HEK293 (cell line): ENCODE measurements at regions of chr17 and their contacts with region 1.

Region 1: DNA sequence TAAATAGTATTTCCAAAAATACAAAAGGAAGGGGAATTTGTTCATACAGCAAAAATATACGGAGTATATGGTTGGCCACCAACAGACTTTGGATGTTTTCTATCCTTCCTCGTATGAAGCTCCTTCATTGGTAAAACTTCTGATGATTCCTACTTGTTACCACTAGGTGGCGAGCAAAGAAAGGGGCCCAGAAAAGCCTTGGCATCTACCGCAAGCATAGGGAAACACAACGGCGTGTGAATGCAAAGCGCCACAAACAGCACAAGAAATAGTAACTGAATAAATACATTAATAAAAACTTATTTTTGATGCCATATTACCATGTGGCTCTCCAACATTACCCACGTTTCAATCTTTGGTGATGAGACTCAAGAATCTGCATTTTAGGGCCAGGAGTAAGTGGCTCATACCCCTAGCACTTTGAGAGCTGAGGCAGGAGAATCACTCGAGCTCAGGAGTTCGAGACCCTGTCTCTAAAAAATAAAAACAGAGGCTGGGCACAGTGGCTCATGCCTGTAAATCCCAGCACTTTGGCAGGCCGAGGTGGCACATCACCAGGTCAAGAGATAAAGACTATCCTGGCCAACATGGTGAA is 34.5 kb downstream of the YWHAE start:
- H3K4me3 ChIP-seq: no peak overlapping the region
- H3K27ac ChIP-seq: no peak overlapping the region; the same call in 1 of the 2 replicates
- H3K4me1 ChIP-seq: peaks cover 46% of the 10 kb centered on the region
- CTCF ChIP-seq: peak; percentile 61; the same call in 1 of the 2 replicates

Region 2: DNA sequence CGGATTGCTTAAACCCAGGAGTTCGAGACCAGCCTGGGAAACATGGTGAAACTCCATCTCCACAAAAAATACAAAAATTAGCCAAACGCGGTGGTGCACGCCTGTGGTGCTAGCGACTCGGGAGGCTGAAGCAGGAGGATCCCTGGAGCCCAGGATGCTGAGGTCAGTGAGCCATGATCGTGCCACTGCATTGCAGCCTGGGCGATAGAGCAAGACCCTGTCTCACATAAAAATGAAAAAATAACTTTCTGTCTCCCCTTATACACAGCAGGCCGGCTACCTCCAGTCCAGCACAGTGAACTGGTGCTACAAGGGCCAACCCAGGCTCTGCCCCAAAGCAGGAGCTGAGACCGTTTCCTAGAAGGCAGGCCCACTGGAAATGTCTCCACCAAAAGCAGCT is 25.2 kb before region 1 on chr17:
- CTCF ChIA-PET with region 1: interaction called, 11 read pairs
- POLR2A ChIA-PET with region 1: interaction called, 14 read pairs
- H3K4me3 ChIP-seq: no peak overlapping the region
- H3K27ac ChIP-seq: no peak overlapping the region
- H3K4me1 ChIP-seq: no peaks in the 10 kb centered on the region
- CTCF ChIP-seq: no peak

Region 3: DNA sequence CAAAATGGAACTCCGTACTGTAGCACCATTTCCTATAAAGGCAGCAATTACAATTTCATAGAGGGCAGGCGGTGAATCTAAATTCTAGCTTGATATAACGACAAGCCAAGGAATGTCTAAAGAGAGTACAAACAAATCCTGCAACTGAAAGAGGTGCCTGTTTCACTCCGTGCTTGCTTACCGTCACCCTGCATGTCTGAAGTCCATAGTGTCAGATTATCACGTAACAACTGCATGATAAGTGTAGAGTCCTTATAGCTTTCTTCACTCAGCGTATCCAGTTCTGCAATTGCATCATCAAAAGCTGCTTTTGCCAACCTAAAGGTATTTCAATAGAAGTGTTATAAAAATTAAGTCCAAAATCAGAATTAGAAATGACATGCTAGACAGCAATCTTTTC is 11.5 kb before region 1 on chr17:
- CTCF ChIA-PET with region 1: interaction called, 15 read pairs
- POLR2A ChIA-PET with region 1: no interaction called
- H3K4me3 ChIP-seq: no peak overlapping the region
- H3K27ac ChIP-seq: no peak overlapping the region
- H3K4me1 ChIP-seq: no peaks in the 10 kb centered on the region
- CTCF ChIP-seq: no peak

Region 4: DNA sequence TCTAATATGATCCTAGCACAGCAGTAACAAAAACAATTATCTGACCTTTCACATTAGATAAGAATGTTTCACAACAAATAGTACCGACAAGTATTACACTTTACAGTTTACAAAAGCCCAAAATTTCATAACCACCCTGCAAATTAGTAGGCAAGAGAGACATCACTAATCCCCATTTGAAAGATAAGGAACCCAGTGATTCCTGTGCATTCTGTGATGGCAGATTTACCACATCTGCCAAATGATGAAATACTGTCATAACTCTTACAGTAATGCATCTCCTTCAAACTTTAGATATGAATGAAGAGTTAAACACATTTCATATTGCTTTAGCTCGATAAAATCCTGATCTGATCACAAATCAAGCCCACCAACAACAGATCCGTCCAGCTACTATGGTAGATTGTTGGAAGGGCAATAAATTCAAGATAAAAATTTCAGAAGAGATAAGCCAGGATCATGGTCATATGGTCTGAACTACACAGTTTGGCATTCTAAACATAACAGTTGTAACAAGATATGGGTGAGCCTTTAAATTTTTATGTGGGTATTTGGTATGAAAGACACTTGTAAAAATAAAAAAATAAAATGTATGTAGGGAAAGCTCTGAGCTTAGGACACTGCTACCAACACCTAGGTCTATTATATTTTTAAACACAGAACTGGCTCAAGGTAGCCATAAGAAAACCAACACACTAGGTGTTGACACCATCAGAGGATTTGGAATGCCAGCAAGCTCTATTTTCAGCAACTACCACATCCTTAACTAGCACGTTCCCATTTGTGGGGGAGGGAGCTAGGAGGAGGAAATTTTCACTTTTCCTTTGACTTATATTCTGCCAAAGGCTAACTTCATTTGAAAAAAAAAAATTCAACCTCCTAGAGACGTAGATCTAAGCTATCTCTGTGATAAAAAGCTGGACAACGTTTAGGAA is 25.2 kb after region 1 on chr17:
- CTCF ChIA-PET with region 1: interaction called, 40 read pairs
- POLR2A ChIA-PET with region 1: interaction called, 5 read pairs
- H3K4me3 ChIP-seq: no peak overlapping the region
- H3K27ac ChIP-seq: peak overlapping the region; percentile 75
- H3K4me1 ChIP-seq: peaks cover 70% of the 10 kb centered on the region
- CTCF ChIP-seq: no peak

Region 5: GRCh38 chr17:1455797-1456599 is 90.5 kb after region 1 on chr17 and contains the start of gene CRK:
- CTCF ChIA-PET with region 1: interaction called, 23 read pairs
- POLR2A ChIA-PET with region 1: interaction called, 7 read pairs
- H3K4me3 ChIP-seq: peak within 1 kb of the TSS; percentile 98
- H3K27ac ChIP-seq: peak within 1 kb of the TSS; percentile 92
- H3K4me1 ChIP-seq: peaks cover 7% of the 10 kb centered on the region
- CTCF ChIP-seq: no peak

Region 6: GRCh38 chr17:1532836-1533602 is 167.5 kb after region 1 on chr17:
- CTCF ChIA-PET with region 1: interaction called, 15 read pairs
- POLR2A ChIA-PET with region 1: no interaction called
- H3K4me3 ChIP-seq: no peak overlapping the region
- H3K27ac ChIP-seq: no peak overlapping the region
- H3K4me1 ChIP-seq: no peaks in the 10 kb centered on the region
- CTCF ChIP-seq: no peak